ENCODE measurements at regions of chr2 and their contacts with region 1.

Region 1: GRCh38 chr2:24021193-24021998 is 11.5 kb downstream of the MFSD2B start:
- DNase-seq: peak; percentile 61
- ATAC-seq: peak; percentile 84
- H3K4me3 ChIP-seq: no peak overlapping the region
- H3K27ac ChIP-seq: peak overlapping the region; percentile 41
- H3K4me1 ChIP-seq: peaks cover 43% of the 10 kb centered on the region
- H3K27me3 ChIP-seq: no peaks in the 10 kb centered on the region
- CTCF ChIP-seq: peak; percentile 95
- EP300 ChIP-seq: no peak
- POLR2A ChIP-seq: no peak
- RAD21 ChIP-seq: peak; percentile 97

Region 2: DNA sequence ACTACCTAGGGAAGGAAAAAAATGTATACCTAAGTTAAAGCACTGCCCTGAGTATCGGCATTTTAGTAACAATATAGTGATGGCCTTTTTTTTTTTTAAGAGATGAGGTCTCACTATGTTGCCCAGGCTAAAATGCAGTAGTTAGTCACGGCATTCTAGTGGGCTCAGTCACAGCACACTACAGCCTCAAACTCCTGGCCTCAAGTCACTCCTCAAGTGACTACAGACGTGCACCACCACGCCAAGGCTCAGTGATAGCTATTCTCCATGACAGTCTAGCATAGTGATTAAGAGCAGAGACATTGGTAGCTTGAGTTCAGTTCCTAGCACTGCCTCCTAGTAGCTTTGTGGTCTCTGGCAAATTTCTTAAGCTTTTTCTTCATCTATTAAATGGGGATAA is 53.5 kb before region 1 on chr2:
- CTCF ChIA-PET with region 1: no interaction called
- POLR2A ChIA-PET with region 1: no interaction called
- in situ Hi-C with region 1: no loop called
- intact Hi-C with region 1: no loop called
- DNase-seq: no peak
- ATAC-seq: no peak
- H3K4me3 ChIP-seq: no peak overlapping the region
- H3K27ac ChIP-seq: no peak overlapping the region
- H3K4me1 ChIP-seq: no peaks in the 10 kb centered on the region
- H3K27me3 ChIP-seq: no peaks in the 10 kb centered on the region; a peak in 1 of 5 replicates
- CTCF ChIP-seq: no peak
- EP300 ChIP-seq: no peak
- POLR2A ChIP-seq: no peak
- RAD21 ChIP-seq: no peak

Region 3: GRCh38 chr2:23988371-23988770 is 33.0 kb before region 1 on chr2:
- CTCF ChIA-PET with region 1: interaction called, 5 read pairs
- POLR2A ChIA-PET with region 1: no interaction called
- in situ Hi-C with region 1: no loop called
- intact Hi-C with region 1: loop called (anchors 1 kb)
- DNase-seq: peak; percentile 13
- ATAC-seq: peak; percentile 54; the same call in 2 of the 3 replicates
- H3K4me3 ChIP-seq: no peak overlapping the region
- H3K27ac ChIP-seq: no peak overlapping the region
- H3K4me1 ChIP-seq: no peaks in the 10 kb centered on the region
- H3K27me3 ChIP-seq: no peaks in the 10 kb centered on the region
- CTCF ChIP-seq: peak; percentile 52
- EP300 ChIP-seq: no peak
- POLR2A ChIP-seq: no peak
- RAD21 ChIP-seq: no peak

Region 4: GRCh38 chr2:24058564-24059271 is 37.3 kb after region 1 on chr2:
- CTCF ChIA-PET with region 1: interaction called, 37 read pairs
- POLR2A ChIA-PET with region 1: interaction called, 6 read pairs
- in situ Hi-C with region 1: loop called (anchors 5 kb)
- intact Hi-C with region 1: loop called (anchors 1 kb)
- DNase-seq: no peak
- ATAC-seq: no peak
- H3K4me3 ChIP-seq: no peak overlapping the region
- H3K27ac ChIP-seq: no peak overlapping the region
- H3K4me1 ChIP-seq: peaks cover 7% of the 10 kb centered on the region
- H3K27me3 ChIP-seq: no peaks in the 10 kb centered on the region
- CTCF ChIP-seq: no peak
- EP300 ChIP-seq: no peak
- POLR2A ChIP-seq: no peak
- RAD21 ChIP-seq: no peak

Region 5: DNA sequence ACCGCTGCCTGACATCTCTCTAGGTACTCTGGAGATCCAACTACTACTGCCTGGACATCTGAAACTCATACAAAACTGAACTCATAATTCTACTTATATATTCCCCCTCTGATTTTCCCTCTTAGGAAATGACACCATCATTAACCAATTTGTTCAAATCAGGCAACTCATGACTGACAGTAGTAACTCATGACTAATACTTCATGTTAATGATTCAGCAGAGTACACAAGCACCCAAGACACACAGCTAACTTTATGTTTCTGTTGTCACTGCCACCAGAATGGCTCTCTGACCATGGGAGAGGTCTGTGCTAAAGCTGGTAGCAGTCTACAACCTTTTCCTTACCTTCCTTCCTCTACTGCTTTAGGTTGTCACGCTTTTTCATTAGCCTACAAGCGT is 247.9 kb after region 1 on chr2:
- CTCF ChIA-PET with region 1: no interaction called
- POLR2A ChIA-PET with region 1: no interaction called
- in situ Hi-C with region 1: no loop called
- intact Hi-C with region 1: no loop called
- DNase-seq: peak; percentile 47
- ATAC-seq: peak; percentile 88
- H3K4me3 ChIP-seq: no peak overlapping the region
- H3K27ac ChIP-seq: no peak overlapping the region
- H3K4me1 ChIP-seq: peaks cover 13% of the 10 kb centered on the region; the same call in 1 of the 2 replicates
- H3K27me3 ChIP-seq: no peaks in the 10 kb centered on the region
- CTCF ChIP-seq: no peak
- EP300 ChIP-seq: no peak
- POLR2A ChIP-seq: no peak
- RAD21 ChIP-seq: no peak

Measured in HepG2 (cell line).